ENCODE measurements at regions of chr22 and their contacts with region 1.

Region 1: DNA sequence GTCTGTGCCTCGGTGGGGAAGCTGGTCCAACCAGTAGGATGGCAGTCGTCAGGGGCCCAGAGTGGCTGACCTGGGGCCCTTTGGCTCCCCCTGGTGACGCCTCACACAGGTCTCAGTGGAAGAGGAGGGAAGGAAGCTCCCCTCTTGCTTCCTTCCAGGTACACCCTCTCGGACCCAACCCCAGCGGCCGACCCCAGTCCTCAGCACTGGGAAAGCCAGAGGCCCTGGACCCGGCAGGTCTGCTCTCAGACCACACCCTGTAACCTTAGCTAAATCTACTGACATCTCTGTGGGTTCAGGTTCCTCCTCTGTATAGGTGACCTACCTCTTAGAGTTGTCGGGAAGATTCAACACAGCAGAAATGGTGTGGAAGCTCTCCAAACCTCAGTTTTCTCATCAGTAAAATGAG is 3.4 kb upstream of the SCUBE1 start:
- DNase-seq: no peak
- ATAC-seq: peak; percentile 69

Region 2: DNA sequence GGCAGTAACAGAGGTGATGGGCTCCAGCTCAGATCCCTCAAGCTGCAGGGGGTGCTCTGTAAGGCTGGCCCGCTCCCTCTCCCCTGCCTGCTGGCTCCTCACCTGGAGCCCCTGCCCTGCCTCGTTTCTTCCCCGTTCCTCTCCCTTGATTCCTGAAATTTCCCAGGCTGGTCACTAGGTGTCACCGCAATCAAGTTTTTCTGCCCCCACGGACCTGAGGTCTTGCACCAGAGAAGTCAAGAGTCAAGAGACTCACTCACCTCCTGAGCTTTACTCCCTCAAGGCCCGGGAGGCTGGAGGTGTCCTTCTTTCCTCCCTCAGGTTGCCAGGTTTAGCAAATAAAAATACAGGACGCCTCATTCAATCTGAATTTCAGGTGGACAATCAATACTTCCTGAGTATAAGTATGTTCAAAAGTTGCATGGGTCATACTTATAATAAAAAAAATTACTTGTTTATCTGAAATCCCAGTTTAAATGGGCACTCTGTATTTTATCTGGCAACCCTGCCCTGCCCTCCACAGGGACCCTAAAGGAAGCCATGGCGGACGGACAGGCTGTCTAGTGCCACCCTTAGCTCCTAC is 72.5 kb before region 1 on chr22:
- intact Hi-C with region 1: loop called (anchors 1 kb)
- DNase-seq: no peak
- ATAC-seq: peak; percentile 56

Region 3: DNA sequence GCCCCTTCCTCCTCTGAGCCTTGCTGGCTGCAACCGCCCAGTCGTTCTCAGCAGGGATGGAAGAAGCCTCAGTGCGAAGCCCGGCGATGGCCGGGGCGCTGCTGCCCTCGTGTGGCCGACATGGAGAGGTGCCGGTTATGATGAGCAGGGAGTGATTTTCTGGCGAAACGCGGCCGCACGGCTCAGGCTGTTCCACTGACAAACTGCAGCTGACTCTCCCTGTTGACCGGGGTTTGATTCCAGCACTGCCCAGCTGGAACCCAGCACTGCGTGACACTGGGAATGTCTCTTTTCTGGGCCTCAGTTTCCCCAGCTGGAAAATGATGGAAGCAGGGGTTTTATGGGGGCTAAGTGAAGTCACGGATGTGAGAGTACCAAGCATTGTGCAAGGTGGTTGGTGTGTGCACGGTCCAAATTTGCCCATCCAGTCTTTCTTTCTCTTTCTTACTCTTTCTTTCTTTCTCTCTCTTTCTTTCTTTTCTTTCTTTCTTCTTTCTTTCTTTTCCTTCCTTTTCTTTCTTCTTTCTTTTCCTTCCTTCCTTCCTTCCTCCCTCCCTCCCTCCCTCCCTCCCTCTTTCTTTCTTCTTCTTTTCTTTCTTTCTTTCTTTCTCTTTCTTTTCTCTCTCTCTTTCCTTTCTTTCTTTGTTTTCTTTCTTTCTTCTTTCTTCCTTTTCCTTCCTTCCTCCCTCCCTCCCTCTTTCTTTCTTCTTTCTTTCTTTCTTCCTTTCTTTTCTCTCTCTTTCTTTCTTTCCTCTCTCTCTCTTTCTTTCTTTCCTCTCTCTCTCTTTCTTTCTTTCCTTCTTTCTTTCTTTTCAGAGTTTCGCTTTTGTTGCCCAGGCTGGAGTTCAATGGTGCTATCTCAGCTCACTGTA is 39.5 kb after region 1 on chr22:
- intact Hi-C with region 1: no loop called
- DNase-seq: peak; percentile 90
- ATAC-seq: peak; percentile 87

Measured in Right ventricle myocardium inferior (tissue), 1 donor.